ENCODE measurements at regions of chr18 and their contacts with region 1.

Region 1: GRCh38 chr18:42114310-42114943 is 159.4 kb downstream of the PIK3C3 start:
- DNase-seq: no peak
- H3K4me3 ChIP-seq: no peak overlapping the region
- H3K27ac ChIP-seq: peak overlapping the region in 1 of 4 donors; percentile 18
- H3K4me1 ChIP-seq: peaks cover 0 to 13% (median 8%) of the 10 kb centered on the region in 4 donors
- H3K27me3 ChIP-seq: no peaks in the 10 kb centered on the region
- CTCF ChIP-seq: peak; percentile 82 to 93 (median 84)
- EP300 ChIP-seq: no peak
- POLR2A ChIP-seq: no peak

Region 2: DNA sequence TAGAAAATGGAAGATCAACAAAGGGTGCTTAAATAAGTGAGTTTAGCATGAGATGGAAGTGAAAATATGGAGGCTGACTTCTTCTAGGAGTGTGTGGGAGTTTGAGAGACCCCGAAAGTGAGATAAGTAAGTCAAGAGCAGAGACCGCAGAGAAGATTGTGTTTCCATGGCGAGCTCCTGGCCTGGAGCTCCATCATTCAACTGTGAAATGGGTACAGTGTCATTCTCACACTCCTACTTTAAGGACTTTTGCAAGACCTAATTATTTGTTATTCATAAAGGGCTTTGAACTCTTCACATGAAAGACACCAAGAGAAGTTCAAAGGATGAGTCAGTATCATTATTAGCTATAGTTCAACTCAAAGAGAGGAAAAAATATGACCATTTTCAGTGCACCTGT is 293.6 kb before region 1 on chr18:
- intact Hi-C with region 1: no loop called
- DNase-seq: no peak
- H3K4me3 ChIP-seq: no peak overlapping the region
- H3K27ac ChIP-seq: no peak overlapping the region
- H3K4me1 ChIP-seq: no peaks in the 10 kb centered on the region
- H3K27me3 ChIP-seq: no peaks in the 10 kb centered on the region
- CTCF ChIP-seq: no peak
- EP300 ChIP-seq: no peak
- POLR2A ChIP-seq: no peak

Region 3: GRCh38 chr18:42274488-42275137 is 160.2 kb after region 1 on chr18:
- intact Hi-C with region 1: loop called (anchors 10 kb)
- DNase-seq: no peak
- H3K4me3 ChIP-seq: no peak overlapping the region
- H3K27ac ChIP-seq: peak overlapping the region in 1 of 4 donors; percentile 29
- H3K4me1 ChIP-seq: peaks cover 7 to 30% (median 26%) of the 10 kb centered on the region in 4 donors
- H3K27me3 ChIP-seq: no peaks in the 10 kb centered on the region
- CTCF ChIP-seq: no peak
- EP300 ChIP-seq: no peak
- POLR2A ChIP-seq: no peak

Region 4: DNA sequence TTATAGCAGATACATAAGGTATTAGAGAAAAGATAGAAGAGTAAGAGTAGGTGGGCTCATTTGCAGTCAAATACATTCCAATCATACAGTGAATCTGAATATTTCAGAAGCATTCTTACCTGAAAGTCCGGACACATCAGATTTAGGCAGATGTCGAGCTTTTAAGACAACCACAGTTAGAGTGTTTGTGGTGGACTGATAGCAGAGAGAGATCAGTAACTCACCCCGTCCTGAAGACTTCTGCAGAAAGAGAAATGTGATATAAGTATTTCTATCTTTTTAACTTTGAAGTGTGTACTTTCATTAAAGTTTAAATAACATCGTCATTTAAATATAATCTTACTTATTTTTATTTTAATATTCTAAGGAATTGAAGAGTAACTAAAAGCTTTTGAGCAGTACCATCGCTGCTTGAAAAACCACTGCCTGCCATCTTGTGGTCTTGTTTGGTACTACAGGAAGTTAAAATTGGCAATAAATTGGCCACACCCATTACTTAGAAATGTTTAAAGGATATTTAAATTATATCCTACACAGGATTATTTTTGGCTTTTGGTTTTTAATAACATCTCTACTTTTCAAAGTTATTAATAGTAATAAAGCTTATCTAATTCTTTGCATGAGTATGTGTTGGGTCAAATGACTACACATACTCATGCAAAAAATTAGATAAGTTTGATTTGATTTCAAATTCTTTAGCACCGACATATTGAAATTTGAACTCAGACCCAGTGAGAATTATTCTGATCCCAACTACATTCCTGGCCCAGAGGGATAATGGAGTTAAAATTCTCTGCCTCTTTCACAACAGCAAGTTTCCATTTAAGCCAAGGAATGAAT is 1157.4 kb after region 1 on chr18:
- intact Hi-C with region 1: loop called (anchors 5 kb)
- DNase-seq: no peak
- H3K4me3 ChIP-seq: no peak overlapping the region
- H3K27ac ChIP-seq: no peak overlapping the region
- H3K4me1 ChIP-seq: no peaks in the 10 kb centered on the region
- H3K27me3 ChIP-seq: peaks cover 0 to 6% (median 0%) of the 10 kb centered on the region in 4 donors
- CTCF ChIP-seq: peak; percentile 68 to 84 (median 78)
- EP300 ChIP-seq: no peak
- POLR2A ChIP-seq: no peak

Region 5: GRCh38 chr18:43587538-43588153 is 1473.2 kb after region 1 on chr18:
- intact Hi-C with region 1: loop called (anchors 10 kb)
- DNase-seq: no peak
- H3K4me3 ChIP-seq: no peak overlapping the region
- H3K27ac ChIP-seq: no peak overlapping the region
- H3K4me1 ChIP-seq: no peaks in the 10 kb centered on the region
- H3K27me3 ChIP-seq: no peaks in the 10 kb centered on the region
- CTCF ChIP-seq: peak; percentile 66 to 81 (median 80)
- EP300 ChIP-seq: no peak
- POLR2A ChIP-seq: no peak